ENCODE measurements at regions of chr20 and their contacts with region 1.

Region 1: DNA sequence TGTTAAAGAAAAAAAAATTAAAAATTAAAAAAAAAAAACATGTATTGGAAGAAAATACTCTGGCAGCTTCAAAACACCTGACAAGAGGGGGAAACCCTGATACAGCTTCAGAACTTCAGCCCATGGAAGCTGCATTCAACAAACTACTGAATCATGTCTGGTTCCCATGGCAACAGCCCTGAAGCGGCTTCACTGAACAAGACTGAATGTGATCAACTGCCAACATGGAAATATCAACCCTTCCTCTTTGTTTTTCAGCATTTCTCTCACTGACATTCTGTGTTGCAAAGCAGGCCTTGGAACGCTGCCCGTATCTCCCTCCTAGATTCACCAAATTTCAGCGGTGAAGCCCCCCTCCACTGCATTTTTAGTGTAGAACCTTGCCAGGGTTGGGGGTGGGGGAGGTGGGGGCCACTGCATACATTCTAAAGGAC is 91.3 kb upstream of the SHLD1 start:
- DNase-seq: peak in 7 of 9 donors; percentile 20 to 83 (median 60)
- ATAC-seq: peak; percentile 75
- H3K4me3 ChIP-seq: no peak overlapping the region
- H3K4me3 Mint-ChIP-seq: peak overlapping the region in 1 of 10 donors; percentile 9
- H3K27ac ChIP-seq: no peak overlapping the region
- H3K27ac Mint-ChIP-seq: peak overlapping the region in 7 of 9 donors; percentile 0 to 94 (median 65)
- H3K4me1 ChIP-seq: peaks cover 0 to 9% of the 10 kb centered on the region in 2 donors
- H3K4me1 Mint-ChIP-seq: peaks cover 6 to 22% (median 12%) of the 10 kb centered on the region in 7 donors
- H3K27me3 ChIP-seq: no peaks in the 10 kb centered on the region
- H3K27me3 Mint-ChIP-seq: no peaks in the 10 kb centered on the region

Region 2: GRCh38 chr20:5674176-5674660 is 15.3 kb after region 1 on chr20:
- CTCF ChIA-PET with region 1: interaction called, 4 read pairs
- POLR2A ChIA-PET with region 1: no interaction called
- intact Hi-C with region 1: loop called in 1 of 2 experiments (anchors 2 kb)
- DNase-seq: peak in 1 of 9 donors; percentile 5
- ATAC-seq: peak; percentile 77
- H3K4me3 ChIP-seq: no peak overlapping the region
- H3K4me3 Mint-ChIP-seq: no peak overlapping the region
- H3K27ac ChIP-seq: no peak overlapping the region
- H3K27ac Mint-ChIP-seq: peak overlapping the region in 2 of 9 donors; percentile 1 to 42
- H3K4me1 ChIP-seq: no peaks in the 10 kb centered on the region
- H3K4me1 Mint-ChIP-seq: peaks cover 0 to 9% (median 6%) of the 10 kb centered on the region in 7 donors
- H3K27me3 ChIP-seq: no peaks in the 10 kb centered on the region
- H3K27me3 Mint-ChIP-seq: no peaks in the 10 kb centered on the region

Measured in naive thymus-derived CD4-positive, alpha-beta T cell (primary cell).